IMR-90 (cell line): ENCODE measurements at regions of chr7 and their contacts with region 1.

Region 1: DNA sequence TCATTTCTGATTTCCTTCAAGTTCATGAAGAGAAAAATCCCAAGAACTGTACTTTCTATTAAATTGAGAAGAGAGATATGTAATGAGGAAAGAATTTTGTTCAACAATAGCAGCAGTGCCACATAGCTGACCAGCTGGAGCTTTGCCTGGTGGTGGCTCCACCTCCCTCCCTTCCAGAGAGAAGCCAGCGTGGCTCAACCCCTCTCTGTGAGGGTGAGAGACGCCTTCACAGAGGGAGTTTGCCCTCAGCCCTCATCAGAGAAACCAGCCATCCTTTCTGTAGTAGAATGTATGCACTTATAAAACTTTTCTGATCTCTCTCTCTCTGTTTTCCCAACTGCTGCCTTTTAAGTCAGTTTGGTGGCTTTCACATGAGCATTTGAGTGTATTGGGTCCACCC is 20.5 kb upstream of the COL1A2 start:
- DNase-seq: peak; percentile 93
- ATAC-seq: peak; percentile 85
- H3K4me3 ChIP-seq: peak overlapping the region; percentile 41; the same call in 1 of the 2 replicates
- H3K27ac ChIP-seq: peak overlapping the region; percentile 100
- H3K4me1 ChIP-seq: peaks cover 13% of the 10 kb centered on the region
- H3K27me3 ChIP-seq: no peaks in the 10 kb centered on the region
- CTCF ChIP-seq: no peak; the same call in 1 of the 2 replicates
- POLR2A ChIP-seq: peak; percentile 90
- RAD21 ChIP-seq: peak; percentile 49

Region 2: DNA sequence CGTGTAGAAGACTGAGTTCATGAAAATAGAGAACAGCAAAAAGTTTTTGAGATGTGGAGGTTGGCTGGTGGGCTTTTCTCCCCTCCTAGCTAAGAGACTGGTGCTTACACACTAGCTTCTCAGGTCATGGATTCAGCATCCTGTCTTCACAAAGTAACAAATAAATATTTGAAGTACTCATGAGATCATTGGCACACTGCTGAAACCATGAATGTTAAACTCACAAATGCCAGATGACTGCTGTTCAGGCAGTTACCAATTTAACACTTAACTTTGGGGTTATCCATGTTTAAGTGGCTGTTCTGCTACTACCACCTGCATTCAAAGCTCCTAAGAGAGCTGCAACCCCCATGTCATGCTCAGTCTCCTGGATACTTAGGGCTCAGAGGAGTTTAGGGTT is 251.1 kb before region 1 on chr7:
- CTCF ChIA-PET with region 1: no interaction called
- POLR2A ChIA-PET with region 1: interaction called, 15 read pairs
- dilution Hi-C with region 1: no loop called
- in situ Hi-C with region 1: no loop called
- intact Hi-C with region 1: no loop called
- DNase-seq: peak; percentile 54
- ATAC-seq: peak; percentile 63
- H3K4me3 ChIP-seq: no peak overlapping the region
- H3K27ac ChIP-seq: no peak overlapping the region
- H3K4me1 ChIP-seq: peaks cover 9% of the 10 kb centered on the region
- H3K27me3 ChIP-seq: no peaks in the 10 kb centered on the region
- CTCF ChIP-seq: no peak
- POLR2A ChIP-seq: no peak
- RAD21 ChIP-seq: no peak

Region 3: GRCh38 chr7:94301024-94301586 is 73.1 kb before region 1 on chr7:
- CTCF ChIA-PET with region 1: interaction called, 19 read pairs
- POLR2A ChIA-PET with region 1: interaction called, 79 read pairs
- dilution Hi-C with region 1: no loop called
- in situ Hi-C with region 1: no loop called
- intact Hi-C with region 1: loop called (anchors 1 kb)
- DNase-seq: peak; percentile 98
- ATAC-seq: peak; percentile 80
- H3K4me3 ChIP-seq: peak overlapping the region; percentile 14; the same call in 1 of the 2 replicates
- H3K27ac ChIP-seq: peak overlapping the region; percentile 98
- H3K4me1 ChIP-seq: peaks cover 26% of the 10 kb centered on the region
- H3K27me3 ChIP-seq: no peaks in the 10 kb centered on the region
- CTCF ChIP-seq: 0 out of 2 replicates have a peak, but pooled peaks have one; percentile 26
- POLR2A ChIP-seq: peak; percentile 71
- RAD21 ChIP-seq: peak; percentile 42

Region 4: GRCh38 chr7:94348142-94348541 is 26.1 kb before region 1 on chr7:
- CTCF ChIA-PET with region 1: interaction called, 3 read pairs
- POLR2A ChIA-PET with region 1: interaction called, 5 read pairs
- dilution Hi-C with region 1: no loop called
- in situ Hi-C with region 1: no loop called
- intact Hi-C with region 1: loop called (anchors 2 kb)
- DNase-seq: peak; percentile 95
- ATAC-seq: peak; percentile 88
- H3K4me3 ChIP-seq: peak overlapping the region; percentile 1; the same call in 1 of the 2 replicates
- H3K27ac ChIP-seq: peak overlapping the region; percentile 71
- H3K4me1 ChIP-seq: peaks cover 16% of the 10 kb centered on the region
- H3K27me3 ChIP-seq: no peaks in the 10 kb centered on the region
- CTCF ChIP-seq: no peak
- POLR2A ChIP-seq: no peak
- RAD21 ChIP-seq: no peak

Region 5: DNA sequence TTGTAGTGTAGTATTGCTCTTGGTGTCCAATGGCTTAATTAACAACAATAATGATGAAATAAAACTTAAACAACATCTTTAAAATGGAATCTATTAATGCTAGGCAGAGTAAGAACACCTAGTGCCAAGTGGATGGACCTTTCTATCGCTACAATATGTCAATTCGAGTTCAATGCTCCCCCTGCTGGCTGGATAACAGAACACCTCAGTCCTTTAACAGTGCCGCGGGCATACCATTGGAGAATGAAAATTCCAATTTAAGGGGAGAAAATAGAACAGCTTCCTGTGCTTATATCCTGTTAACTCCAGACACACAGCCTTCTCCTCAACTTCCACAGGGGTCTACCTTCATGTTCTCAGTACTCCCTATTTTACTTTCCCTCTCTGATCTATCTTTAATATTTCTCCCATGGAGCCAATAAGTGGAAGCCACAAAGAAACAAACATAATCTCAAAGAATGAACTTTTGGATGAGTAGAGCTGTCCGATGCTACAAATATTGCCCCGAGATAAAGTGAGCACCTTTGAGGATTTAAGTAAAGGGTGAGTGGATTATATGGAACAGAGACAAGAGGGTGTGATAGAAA is 61.9 kb after region 1 on chr7:
- CTCF ChIA-PET with region 1: no interaction called
- POLR2A ChIA-PET with region 1: interaction called, 5 read pairs
- dilution Hi-C with region 1: no loop called
- in situ Hi-C with region 1: no loop called
- intact Hi-C with region 1: loop called (anchors 1 kb)
- DNase-seq: peak; percentile 78
- ATAC-seq: peak; percentile 43
- H3K4me3 ChIP-seq: no peak overlapping the region
- H3K27ac ChIP-seq: no peak overlapping the region
- H3K4me1 ChIP-seq: peaks cover 8% of the 10 kb centered on the region
- H3K27me3 ChIP-seq: no peaks in the 10 kb centered on the region
- CTCF ChIP-seq: peak; percentile 81
- POLR2A ChIP-seq: no peak
- RAD21 ChIP-seq: peak; percentile 68